ENCODE measurements at regions of chr11 and their contacts with region 1.

Region 1: GRCh38 chr11:2526808-2527381 is 82.1 kb downstream of the KCNQ1 start:
- DNase-seq: peak; percentile 35
- ATAC-seq: no peak
- H3K4me3 Mint-ChIP-seq: no peak overlapping the region
- H3K27ac Mint-ChIP-seq: peak overlapping the region; percentile 67
- H3K4me1 Mint-ChIP-seq: peaks cover 20% of the 10 kb centered on the region
- H3K27me3 Mint-ChIP-seq: no peaks in the 10 kb centered on the region

Region 2: GRCh38 chr11:2196970-2197770 is 329.7 kb before region 1 on chr11:
- CTCF ChIA-PET with region 1: no interaction called
- POLR2A ChIA-PET with region 1: no interaction called
- intact Hi-C with region 1: loop called (anchors 5 to 10 kb)
- DNase-seq: peak; percentile 89
- ATAC-seq: peak; percentile 98
- H3K4me3 Mint-ChIP-seq: no peak overlapping the region
- H3K27ac Mint-ChIP-seq: no peak overlapping the region
- H3K4me1 Mint-ChIP-seq: no peaks in the 10 kb centered on the region
- H3K27me3 Mint-ChIP-seq: peaks cover 8% of the 10 kb centered on the region

Region 3: DNA sequence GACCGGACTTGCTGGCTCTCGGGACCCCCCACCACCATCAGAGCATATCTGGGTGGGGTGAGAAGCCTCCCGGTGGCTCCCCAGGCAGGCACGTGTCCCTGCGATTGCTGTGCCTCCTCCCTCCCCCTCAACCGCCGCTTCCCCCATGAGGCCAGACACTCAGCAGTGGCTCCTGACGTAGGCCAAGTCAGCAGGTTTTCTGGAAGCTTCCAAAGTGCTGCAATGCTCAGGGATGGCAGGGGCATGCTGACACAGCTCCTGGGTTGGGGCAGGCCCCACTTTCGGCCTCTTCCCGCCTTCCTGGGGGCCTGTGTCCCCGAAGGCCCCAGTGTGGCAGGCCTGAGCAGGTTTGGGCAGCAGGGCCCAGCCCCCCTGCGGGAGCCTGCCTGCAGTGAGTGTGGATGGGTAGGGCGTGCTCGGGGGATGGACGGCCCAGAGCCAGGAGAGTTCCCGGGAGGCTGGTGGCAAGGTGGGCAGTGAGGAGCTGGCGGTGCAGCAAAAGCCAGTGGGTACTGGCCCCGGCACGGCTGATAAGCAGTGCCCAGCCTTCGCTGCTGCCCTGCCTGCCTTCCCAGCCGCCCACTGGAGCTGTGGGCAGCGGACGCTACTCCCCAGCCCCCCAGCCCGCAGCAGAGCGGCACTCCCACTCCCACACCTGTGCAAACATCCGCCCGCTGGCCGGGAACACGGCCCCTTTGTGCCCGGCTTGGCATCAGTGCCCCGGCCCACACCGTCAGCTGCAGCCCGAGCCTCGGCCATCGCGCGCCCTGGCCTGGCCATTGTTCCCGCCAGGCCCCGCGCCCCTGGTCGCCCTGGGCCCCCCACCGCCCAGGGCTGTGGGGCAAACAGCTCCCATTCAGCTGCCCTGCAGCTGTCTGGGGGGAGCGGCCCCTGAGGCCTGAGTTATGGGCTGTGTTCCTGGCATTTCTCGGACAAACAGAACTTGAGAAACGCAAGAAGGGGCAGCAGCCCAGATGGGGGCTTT is 47.9 kb after region 1 on chr11:
- CTCF ChIA-PET with region 1: no interaction called
- POLR2A ChIA-PET with region 1: no interaction called
- intact Hi-C with region 1: no loop called
- DNase-seq: peak; percentile 2
- ATAC-seq: no peak
- H3K4me3 Mint-ChIP-seq: no peak overlapping the region
- H3K27ac Mint-ChIP-seq: no peak overlapping the region
- H3K4me1 Mint-ChIP-seq: no peaks in the 10 kb centered on the region
- H3K27me3 Mint-ChIP-seq: no peaks in the 10 kb centered on the region

Region 4: DNA sequence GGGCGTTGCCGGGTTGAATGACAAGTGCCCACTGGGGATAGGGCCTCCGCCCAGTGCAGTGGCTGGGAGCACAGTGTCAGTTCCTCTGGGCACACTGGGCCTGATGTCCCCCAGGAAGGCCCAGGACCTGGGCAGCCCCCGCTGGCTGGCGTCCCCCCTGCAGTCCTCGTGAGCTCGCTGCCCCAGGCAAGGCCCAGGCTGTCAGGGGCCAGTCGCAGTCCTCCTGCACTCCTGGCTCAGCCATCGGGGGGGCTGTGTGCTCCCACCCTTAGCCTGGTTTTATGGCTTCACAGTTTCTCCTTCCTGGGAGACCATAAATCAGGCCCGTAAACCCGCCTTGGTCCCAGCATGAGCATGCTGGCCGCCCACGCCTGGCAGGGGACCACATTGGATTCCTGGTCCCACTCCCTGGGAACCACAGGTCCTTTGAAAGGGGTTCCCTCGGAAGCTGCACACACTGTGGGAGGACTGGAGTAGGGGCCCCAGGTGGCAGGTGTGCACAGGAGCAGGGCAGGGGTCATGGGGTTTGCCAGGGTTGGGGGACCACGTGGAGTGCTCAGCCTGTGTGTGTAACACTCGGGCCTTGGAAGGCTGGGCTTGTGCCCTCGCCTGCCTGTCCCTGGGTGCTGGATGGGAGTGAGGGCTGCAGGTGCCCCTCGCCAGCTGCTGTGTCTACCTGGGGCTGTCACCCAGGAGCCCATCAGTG is 59.3 kb after region 1 on chr11:
- CTCF ChIA-PET with region 1: no interaction called
- POLR2A ChIA-PET with region 1: no interaction called
- intact Hi-C with region 1: no loop called
- DNase-seq: no peak
- ATAC-seq: no peak
- H3K4me3 Mint-ChIP-seq: no peak overlapping the region
- H3K27ac Mint-ChIP-seq: no peak overlapping the region
- H3K4me1 Mint-ChIP-seq: no peaks in the 10 kb centered on the region
- H3K27me3 Mint-ChIP-seq: no peaks in the 10 kb centered on the region